SK-N-SH (cell line): ENCODE measurements at regions of chr16 and their contacts with region 1.

Region 1: DNA sequence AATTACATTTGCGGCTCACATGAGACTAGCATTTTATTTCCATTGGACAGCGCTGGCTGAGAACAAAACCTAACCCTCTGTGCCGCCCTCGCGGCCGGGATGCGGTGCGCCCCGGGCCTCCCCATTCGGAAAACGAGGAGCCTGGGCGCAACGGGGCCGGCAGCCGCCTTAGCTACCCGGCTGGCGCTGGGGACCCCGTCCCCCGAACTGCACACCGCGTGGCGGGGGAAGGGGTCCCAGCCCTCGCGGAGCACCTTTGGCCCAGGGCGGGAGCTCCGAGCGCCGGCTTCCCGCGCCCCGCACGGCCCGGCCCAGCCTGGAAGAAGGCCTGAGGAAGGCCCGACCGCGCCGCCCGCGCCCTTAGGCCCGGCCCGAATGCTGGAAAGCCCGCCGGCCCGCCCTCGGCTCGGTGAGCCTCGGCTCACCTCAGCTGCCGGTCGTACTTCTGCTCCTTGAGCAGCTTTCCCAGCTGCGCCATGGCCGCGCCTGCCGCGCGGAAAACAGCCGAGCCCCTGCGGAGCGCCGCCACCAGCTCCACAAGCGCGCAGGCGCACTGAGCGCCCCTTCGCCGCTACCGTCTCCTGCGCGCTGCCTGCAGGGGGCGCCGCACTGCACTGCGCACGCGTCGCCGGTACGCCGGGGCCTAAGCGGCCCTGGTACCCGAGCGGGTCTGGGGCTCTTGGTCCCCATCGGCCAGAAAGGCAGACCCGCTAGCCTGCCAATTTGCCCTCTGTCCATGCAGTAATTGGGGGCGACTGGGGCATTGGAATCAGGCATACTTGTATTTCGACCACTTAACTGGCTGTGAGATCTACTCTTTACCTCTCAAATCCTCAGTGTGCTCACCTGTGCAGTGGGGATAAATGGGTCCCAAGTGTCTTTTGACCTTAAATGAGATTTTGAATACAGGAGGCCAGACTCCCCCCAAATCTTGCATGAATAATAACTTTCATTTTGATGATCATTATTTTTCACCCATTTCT is at the start of gene NAE1:
- DNase-seq: peak; percentile 98
- H3K4me3 ChIP-seq: peak within 1 kb of the TSS; percentile 67 to 73
- H3K27ac ChIP-seq: peak within 1 kb of the TSS; percentile 64 to 81
- H3K4me1 ChIP-seq: peaks cover 4 to 7% of the 10 kb centered on the region in 2 experiments; a peak in 2 of 4 replicates
- H3K27me3 ChIP-seq: no peaks in the 10 kb centered on the region
- CTCF ChIP-seq: peak; percentile 86
- EP300 ChIP-seq: peak in 1 of 2 experiments; percentile 10; a peak in 1 of 4 replicates
- RAD21 ChIP-seq: peak; percentile 36; the same call in 1 of the 2 replicates
- polyA plus RNA-seq, gene NAE1: 33.8 and 45.5 TPM in 2 replicates

Region 2: GRCh38 chr16:65704866-65705265 is 1125.8 kb before region 1 on chr16:
- CTCF ChIA-PET with region 1: no interaction called
- POLR2A ChIA-PET with region 1: no interaction called
- DNase-seq: no peak
- H3K4me3 ChIP-seq: no peak overlapping the region; a peak in 1 of 4 replicates
- H3K27ac ChIP-seq: no peak overlapping the region
- H3K4me1 ChIP-seq: peaks cover 9 to 12% of the 10 kb centered on the region in 2 experiments; a peak in 3 of 4 replicates
- H3K27me3 ChIP-seq: no peaks in the 10 kb centered on the region
- CTCF ChIP-seq: peak; percentile 44
- EP300 ChIP-seq: no peak
- RAD21 ChIP-seq: peak; percentile 57

Region 3: GRCh38 chr16:66650707-66651473 is 179.8 kb before region 1 on chr16:
- CTCF ChIA-PET with region 1: interaction called, 11 read pairs
- POLR2A ChIA-PET with region 1: no interaction called
- DNase-seq: peak; percentile 83
- H3K4me3 ChIP-seq: peak overlapping the region; percentile 38 to 46
- H3K27ac ChIP-seq: peak overlapping the region in 1 of 2 experiments; percentile 18; a peak in 1 of 4 replicates
- H3K4me1 ChIP-seq: peaks cover 4 to 6% of the 10 kb centered on the region in 2 experiments; a peak in 1 of 4 replicates
- H3K27me3 ChIP-seq: no peaks in the 10 kb centered on the region
- CTCF ChIP-seq: peak; percentile 94
- EP300 ChIP-seq: no peak
- RAD21 ChIP-seq: peak; percentile 71

Region 4: DNA sequence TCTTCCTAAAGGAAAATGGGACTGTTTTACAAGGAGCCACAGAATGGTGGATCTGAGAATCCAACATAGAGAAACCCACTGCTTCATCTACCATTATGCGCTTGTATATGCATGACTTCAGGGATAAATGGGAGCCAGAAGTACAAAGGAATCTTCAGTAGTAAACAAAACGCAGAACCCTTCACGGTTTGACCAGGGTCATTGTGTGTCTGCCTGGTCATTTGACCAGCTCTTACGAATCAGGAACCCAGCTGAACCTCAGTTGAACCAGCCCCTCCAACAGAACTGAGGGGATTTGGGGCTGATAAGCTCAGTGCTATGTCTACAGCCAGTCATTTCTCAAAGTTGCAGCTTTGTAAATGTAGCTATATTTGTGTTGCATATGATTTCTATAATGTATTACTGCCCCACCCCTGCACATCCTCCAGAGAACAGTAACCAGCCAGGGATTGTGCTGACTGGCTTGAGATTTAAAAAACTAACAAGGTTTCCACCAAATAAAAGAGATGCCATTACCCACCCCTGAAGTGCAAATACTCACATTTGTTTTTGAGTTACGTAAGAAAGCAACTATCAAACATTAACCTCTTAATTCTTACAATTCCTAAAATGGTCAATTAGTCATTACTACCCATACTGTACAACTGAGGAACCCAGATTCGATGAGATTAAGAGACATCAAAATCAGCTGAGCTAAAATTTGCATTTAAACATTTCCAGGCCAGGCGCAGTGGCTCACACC is 140.4 kb before region 1 on chr16:
- CTCF ChIA-PET with region 1: no interaction called
- POLR2A ChIA-PET with region 1: no interaction called
- DNase-seq: no peak
- H3K4me3 ChIP-seq: no peak overlapping the region
- H3K27ac ChIP-seq: no peak overlapping the region
- H3K4me1 ChIP-seq: peaks cover 1 to 2% of the 10 kb centered on the region in 2 experiments; a peak in 2 of 4 replicates
- H3K27me3 ChIP-seq: no peaks in the 10 kb centered on the region
- CTCF ChIP-seq: no peak
- EP300 ChIP-seq: no peak
- RAD21 ChIP-seq: no peak

Region 5: DNA sequence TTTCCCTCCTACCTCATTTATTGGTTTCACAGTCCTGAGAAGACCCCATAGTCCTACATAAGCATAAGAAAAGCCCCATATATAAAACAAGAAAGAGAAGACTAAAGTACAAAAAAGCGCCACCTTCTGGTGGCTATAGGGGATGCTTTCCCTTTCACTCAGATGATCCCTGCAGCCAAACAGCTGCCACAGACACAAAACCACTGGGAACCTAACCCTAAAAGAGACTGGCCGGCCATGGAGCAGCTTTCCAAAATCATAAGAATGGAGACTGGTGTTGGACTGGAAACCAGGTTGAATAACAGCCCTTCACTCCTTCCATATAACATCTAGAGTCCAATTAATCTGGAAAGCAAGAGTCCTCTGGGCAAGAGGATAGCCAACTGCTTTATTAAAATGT is 90.7 kb before region 1 on chr16:
- CTCF ChIA-PET with region 1: interaction called, 16 read pairs
- POLR2A ChIA-PET with region 1: no interaction called
- DNase-seq: peak; percentile 69
- H3K4me3 ChIP-seq: peak overlapping the region in 1 of 2 experiments; percentile 12; a peak in 1 of 4 replicates
- H3K27ac ChIP-seq: 0 out of 4 replicates have a peak overlapping the region, but pooled peaks of 1 of the 2 experiments have one; percentile 75
- H3K4me1 ChIP-seq: peaks cover 10 to 15% of the 10 kb centered on the region in 2 experiments; a peak in 3 of 4 replicates
- H3K27me3 ChIP-seq: no peaks in the 10 kb centered on the region
- CTCF ChIP-seq: peak; percentile 82
- EP300 ChIP-seq: no peak
- RAD21 ChIP-seq: peak; percentile 43

Region 6: DNA sequence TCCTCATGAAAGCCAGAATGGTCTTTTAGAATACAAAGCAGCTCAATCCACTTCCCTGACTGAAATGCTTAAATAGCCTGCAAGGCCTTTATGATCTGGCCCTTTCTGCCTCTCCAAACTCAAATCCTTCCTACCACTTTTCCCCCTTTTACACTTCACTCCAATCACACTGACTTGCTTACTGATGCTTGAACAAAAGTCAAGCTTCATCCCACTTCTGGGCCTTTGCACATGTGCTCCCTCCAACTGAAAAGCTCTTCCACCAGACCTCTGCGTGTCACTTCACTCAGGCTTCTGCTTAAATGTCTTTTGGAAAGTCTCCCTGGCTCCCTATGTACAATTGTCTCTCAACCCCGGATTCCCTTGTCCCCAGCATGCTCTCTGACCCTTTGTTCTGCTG is 16.0 kb before region 1 on chr16:
- CTCF ChIA-PET with region 1: interaction called, 36 read pairs
- POLR2A ChIA-PET with region 1: interaction called, 7 read pairs
- DNase-seq: no peak
- H3K4me3 ChIP-seq: no peak overlapping the region
- H3K27ac ChIP-seq: no peak overlapping the region
- H3K4me1 ChIP-seq: no peaks in the 10 kb centered on the region; a peak in 1 of 4 replicates
- H3K27me3 ChIP-seq: no peaks in the 10 kb centered on the region
- CTCF ChIP-seq: no peak
- EP300 ChIP-seq: no peak
- RAD21 ChIP-seq: no peak

Region 7: GRCh38 chr16:66850115-66850815 is 19.6 kb after region 1 on chr16:
- CTCF ChIA-PET with region 1: interaction called, 82 read pairs
- POLR2A ChIA-PET with region 1: no interaction called
- DNase-seq: no peak
- H3K4me3 ChIP-seq: no peak overlapping the region
- H3K27ac ChIP-seq: no peak overlapping the region
- H3K4me1 ChIP-seq: no peaks in the 10 kb centered on the region
- H3K27me3 ChIP-seq: peaks cover 4% of the 10 kb centered on the region; the same call in 1 of the 2 replicates
- CTCF ChIP-seq: no peak
- EP300 ChIP-seq: no peak
- RAD21 ChIP-seq: no peak

Region 8: GRCh38 chr16:66880288-66881013 is 49.7 kb after region 1 on chr16 and contains the start of gene PDP2:
- CTCF ChIA-PET with region 1: interaction called, 14 read pairs
- POLR2A ChIA-PET with region 1: interaction called, 5 read pairs
- DNase-seq: peak; percentile 99
- H3K4me3 ChIP-seq: peak within 1 kb of the TSS; percentile 74 to 95
- H3K27ac ChIP-seq: peak within 1 kb of the TSS in 1 of 2 experiments; percentile 29; a peak in 1 of 4 replicates
- H3K4me1 ChIP-seq: peaks cover 0 to 7% of the 10 kb centered on the region in 2 experiments; a peak in 1 of 4 replicates
- H3K27me3 ChIP-seq: no peaks in the 10 kb centered on the region
- CTCF ChIP-seq: no peak
- EP300 ChIP-seq: no peak
- RAD21 ChIP-seq: no peak
- polyA plus RNA-seq, gene PDP2: 4.7 and 7.3 TPM in 2 replicates

Region 9: GRCh38 chr16:67040906-67041305 is 210.2 kb after region 1 on chr16:
- CTCF ChIA-PET with region 1: no interaction called
- POLR2A ChIA-PET with region 1: no interaction called
- DNase-seq: no peak
- H3K4me3 ChIP-seq: no peak overlapping the region
- H3K27ac ChIP-seq: 0 out of 4 replicates have a peak overlapping the region, but pooled peaks of 1 of the 2 experiments have one; percentile 14
- H3K4me1 ChIP-seq: peaks cover 5 to 15% of the 10 kb centered on the region in 2 experiments
- H3K27me3 ChIP-seq: no peaks in the 10 kb centered on the region
- CTCF ChIP-seq: no peak
- EP300 ChIP-seq: no peak
- RAD21 ChIP-seq: no peak

Region 10: DNA sequence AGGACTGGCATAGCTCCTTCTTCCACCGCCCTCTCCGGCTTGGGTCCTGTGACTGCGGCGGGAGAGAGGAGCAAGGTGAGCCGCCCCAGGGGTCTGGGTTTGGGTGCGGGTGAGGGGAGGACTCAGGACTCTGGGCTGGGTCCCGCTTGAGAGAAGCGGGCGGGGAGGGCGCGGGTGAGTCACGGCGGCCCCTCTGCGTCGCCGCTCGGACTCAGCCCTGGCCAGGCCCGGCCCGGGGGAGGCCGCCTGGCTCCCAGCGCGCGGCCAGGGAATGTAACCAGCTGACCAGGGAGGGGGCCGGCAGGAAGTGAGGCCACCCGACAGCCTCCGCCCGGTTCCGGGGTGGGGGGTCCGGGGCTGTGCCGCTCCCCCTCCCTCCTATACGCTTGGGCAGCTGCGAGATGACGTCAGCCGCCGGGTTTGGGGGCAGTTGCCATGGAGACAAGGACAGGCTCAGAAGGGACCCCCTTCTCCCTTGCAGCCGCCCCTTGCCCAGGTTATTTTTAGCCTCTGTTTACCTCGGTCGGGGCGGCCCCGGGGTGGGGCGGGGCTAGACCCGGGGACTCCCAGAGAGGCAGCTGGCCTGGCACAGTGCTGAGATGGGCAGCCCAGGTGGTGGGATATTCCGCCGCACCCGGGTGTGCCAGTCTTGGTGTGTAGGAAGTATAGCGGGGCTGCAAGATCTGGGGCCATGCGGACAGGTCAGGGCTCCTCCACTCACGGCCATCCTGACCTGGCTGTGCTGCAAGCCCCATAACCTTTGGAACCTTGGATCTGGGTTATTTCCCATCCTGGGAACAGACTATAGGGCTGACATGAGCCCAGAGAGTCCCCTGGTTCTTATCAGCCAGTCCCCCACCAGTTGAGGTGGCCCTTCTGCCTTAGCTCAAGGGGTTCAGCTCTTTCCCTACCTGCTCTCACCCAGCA is 699.6 kb after region 1 on chr16:
- CTCF ChIA-PET with region 1: no interaction called
- POLR2A ChIA-PET with region 1: no interaction called
- DNase-seq: peak; percentile 89
- H3K4me3 ChIP-seq: peak overlapping the region; percentile 77 to 99
- H3K27ac ChIP-seq: peak overlapping the region; percentile 83; a peak in 3 of 4 replicates
- H3K4me1 ChIP-seq: peaks cover 21% of the 10 kb centered on the region in 2 experiments; a peak in 3 of 4 replicates
- H3K27me3 ChIP-seq: no peaks in the 10 kb centered on the region
- CTCF ChIP-seq: no peak
- EP300 ChIP-seq: 0 out of 4 replicates have a peak, but pooled peaks of 1 of the 2 experiments have one; percentile 6
- RAD21 ChIP-seq: no peak